Naive thymus-derived CD4-positive, alpha-beta T cell (primary cell): ENCODE measurements at regions of chr13 and their contacts with region 1.

Region 1: DNA sequence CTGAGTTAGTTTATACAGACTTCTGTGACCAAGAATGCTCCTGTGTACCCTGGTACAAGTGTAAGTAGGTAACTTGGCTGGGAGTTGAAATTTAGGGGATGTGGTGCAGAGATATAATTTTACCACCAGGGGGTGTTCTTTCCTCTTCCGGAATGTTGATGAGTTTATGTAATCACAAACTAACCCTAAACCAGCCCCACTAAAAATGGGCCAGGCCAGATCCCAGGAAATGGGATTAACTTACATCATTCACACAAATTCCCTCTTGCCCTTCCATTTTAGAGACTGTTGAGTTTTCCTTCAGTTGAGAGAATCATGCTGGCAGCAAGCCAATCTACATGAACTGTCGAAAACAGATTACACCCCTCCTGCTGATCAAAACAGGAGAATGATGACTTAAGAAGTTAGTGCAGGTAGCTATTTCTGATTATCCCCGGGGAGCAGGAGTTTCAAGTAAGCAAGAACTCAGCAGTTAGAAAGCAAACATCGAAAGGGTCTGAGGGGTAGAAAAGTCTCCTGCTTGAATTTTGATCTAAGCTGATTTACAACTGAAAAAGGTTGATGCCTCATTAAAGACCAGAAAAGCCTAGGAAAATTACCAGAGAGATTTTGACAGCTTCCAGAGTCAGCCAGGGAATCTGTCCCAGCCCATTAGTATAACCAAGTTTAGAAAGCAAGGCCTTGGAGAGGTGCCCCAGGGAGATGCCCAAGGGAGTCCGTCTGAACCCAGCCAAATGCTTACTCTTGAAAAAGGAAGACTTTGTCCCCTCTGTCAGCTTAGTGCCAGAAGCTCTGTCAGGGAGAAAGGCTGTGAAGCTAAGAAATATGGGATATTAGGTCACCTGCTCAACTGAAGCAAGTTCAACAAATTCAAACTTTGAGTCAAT is 32.3 kb upstream of the MED4 start:
- DNase-seq: peak in 8 of 9 donors; percentile 20 to 84 (median 80)
- ATAC-seq: peak; percentile 96
- H3K4me3 ChIP-seq: no peak overlapping the region
- H3K4me3 Mint-ChIP-seq: peak overlapping the region in 9 of 10 donors; percentile 25 to 69 (median 52)
- H3K27ac ChIP-seq: peak overlapping the region; percentile 54
- H3K27ac Mint-ChIP-seq: peak overlapping the region in 8 of 9 donors; percentile 83 to 95 (median 89)
- H3K4me1 ChIP-seq: peaks cover 5 to 15% of the 10 kb centered on the region in 2 donors
- H3K4me1 Mint-ChIP-seq: peaks cover 14 to 42% (median 35%) of the 10 kb centered on the region in 7 donors
- H3K27me3 ChIP-seq: no peaks in the 10 kb centered on the region
- H3K27me3 Mint-ChIP-seq: peaks cover 0 to 3% (median 0%) of the 10 kb centered on the region in 5 donors

Region 2: DNA sequence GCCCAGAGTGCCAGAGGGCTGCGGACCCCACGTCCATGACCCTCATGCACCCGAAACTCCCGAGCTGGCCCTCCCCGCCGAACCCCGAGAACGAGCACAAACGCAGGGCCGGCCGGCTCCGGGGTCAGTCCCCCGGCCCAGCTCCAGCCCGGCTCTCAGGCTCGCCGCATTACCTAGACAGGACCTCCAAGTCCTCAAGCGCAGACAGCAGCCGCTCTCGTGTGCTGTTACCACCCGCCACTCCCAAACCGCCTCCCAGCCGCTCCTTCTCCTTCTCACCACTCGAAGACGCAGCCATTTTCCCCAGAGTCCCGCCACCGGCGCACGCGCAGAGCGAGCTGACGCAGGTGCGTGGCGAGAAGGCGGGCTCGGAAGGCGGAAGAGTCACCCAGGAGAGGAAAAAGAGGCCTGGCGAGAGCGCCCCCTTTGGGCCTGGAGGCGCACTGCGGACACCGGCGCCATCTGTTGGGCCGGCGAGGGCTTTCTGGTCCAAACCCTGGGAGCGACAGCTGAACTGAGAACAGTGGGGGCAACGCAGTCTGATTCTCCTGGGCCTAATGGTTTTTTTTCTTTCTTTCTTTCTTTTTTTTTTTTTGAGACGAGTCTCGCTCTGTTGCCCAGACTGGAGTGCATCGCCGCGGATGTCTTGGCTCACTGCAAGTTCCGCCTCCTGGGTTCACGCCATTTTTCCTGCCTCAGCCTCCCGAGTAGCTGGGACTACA is 32.2 kb before region 1 on chr13 and contains the start of gene MED4:
- CTCF ChIA-PET with region 1: interaction called, 10 read pairs
- POLR2A ChIA-PET with region 1: no interaction called
- intact Hi-C with region 1: loop called in 1 of 2 experiments (anchors 2 kb)
- DNase-seq: peak; percentile 94 to 99 (median 98)
- ATAC-seq: peak; percentile 100
- H3K4me3 ChIP-seq: peak within 1 kb of the TSS; percentile 90
- H3K4me3 Mint-ChIP-seq: peak within 1 kb of the TSS; percentile 94 to 99 (median 96)
- H3K27ac ChIP-seq: peak within 1 kb of the TSS; percentile 99
- H3K27ac Mint-ChIP-seq: peak within 1 kb of the TSS; percentile 92 to 98 (median 96)
- H3K4me1 ChIP-seq: peaks cover 13 to 26% of the 10 kb centered on the region in 2 donors
- H3K4me1 Mint-ChIP-seq: peaks cover 26 to 56% (median 48%) of the 10 kb centered on the region in 7 donors
- H3K27me3 ChIP-seq: no peaks in the 10 kb centered on the region
- H3K27me3 Mint-ChIP-seq: peaks cover 0 to 9% (median 0%) of the 10 kb centered on the region in 5 donors
- total RNA-seq, gene MED4: 43.4 to 60.9 (median 50.0) TPM

Region 3: DNA sequence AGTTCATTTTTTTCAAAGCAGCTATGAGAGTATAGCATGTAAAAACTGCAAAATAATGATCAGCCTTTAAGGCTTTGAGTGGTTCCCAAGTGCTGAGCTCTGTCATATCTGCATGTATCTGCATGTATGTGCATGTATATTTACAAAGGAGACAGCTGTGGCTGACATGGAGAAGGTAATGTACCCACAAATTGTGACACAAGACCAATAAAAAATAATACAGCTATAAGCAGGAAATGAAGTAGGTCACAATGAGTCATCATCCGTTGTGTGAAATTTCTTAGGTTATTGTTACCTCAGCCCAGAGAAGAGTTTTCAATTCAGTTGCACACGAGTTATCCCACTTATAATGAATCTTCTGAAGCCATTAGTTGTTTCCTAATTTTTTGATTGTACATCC is 28.7 kb after region 1 on chr13:
- CTCF ChIA-PET with region 1: interaction called, 12 read pairs
- POLR2A ChIA-PET with region 1: interaction called, 23 read pairs
- intact Hi-C with region 1: loop called (anchors 1 kb)
- DNase-seq: peak in 7 of 9 donors; percentile 49 to 81 (median 74)
- ATAC-seq: peak; percentile 88
- H3K4me3 ChIP-seq: peak overlapping the region; percentile 34
- H3K4me3 Mint-ChIP-seq: peak overlapping the region; percentile 62 to 83 (median 74)
- H3K27ac ChIP-seq: peak overlapping the region; percentile 75
- H3K27ac Mint-ChIP-seq: peak overlapping the region; percentile 89 to 99 (median 92)
- H3K4me1 ChIP-seq: peaks cover 28 to 64% of the 10 kb centered on the region in 2 donors
- H3K4me1 Mint-ChIP-seq: peaks cover 47 to 89% (median 78%) of the 10 kb centered on the region in 7 donors
- H3K27me3 ChIP-seq: no peaks in the 10 kb centered on the region
- H3K27me3 Mint-ChIP-seq: no peaks in the 10 kb centered on the region

Region 4: DNA sequence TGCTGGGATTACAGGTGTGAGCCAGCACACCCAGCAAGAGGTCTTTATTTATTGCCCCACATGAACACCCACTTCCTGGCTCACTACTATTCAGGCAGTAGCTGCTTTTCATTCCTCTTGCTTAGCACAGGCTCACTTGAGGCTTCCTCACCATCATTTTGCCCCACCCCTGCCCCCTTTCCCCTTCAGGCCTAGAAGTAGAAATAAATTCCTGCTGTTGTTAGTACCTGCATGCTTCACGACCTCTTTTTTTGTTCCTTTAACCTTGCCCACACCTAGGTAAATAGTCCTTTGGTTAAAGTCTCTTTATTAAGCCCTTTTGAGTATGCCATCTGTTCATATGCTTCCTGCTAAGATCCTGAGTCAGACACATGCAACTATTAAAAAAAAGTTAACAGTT is 72.3 kb after region 1 on chr13:
- CTCF ChIA-PET with region 1: interaction called, 5 read pairs
- POLR2A ChIA-PET with region 1: no interaction called
- intact Hi-C with region 1: loop called in 1 of 2 experiments (anchors 1 kb)
- DNase-seq: no peak
- ATAC-seq: no peak
- H3K4me3 ChIP-seq: no peak overlapping the region
- H3K4me3 Mint-ChIP-seq: peak overlapping the region in 6 of 10 donors; percentile 1 to 44 (median 10)
- H3K27ac ChIP-seq: no peak overlapping the region
- H3K27ac Mint-ChIP-seq: peak overlapping the region in 8 of 9 donors; percentile 46 to 82 (median 69)
- H3K4me1 ChIP-seq: peaks cover under 1 to 10% of the 10 kb centered on the region in 2 donors
- H3K4me1 Mint-ChIP-seq: peaks cover 5 to 36% (median 28%) of the 10 kb centered on the region in 7 donors
- H3K27me3 ChIP-seq: no peaks in the 10 kb centered on the region
- H3K27me3 Mint-ChIP-seq: peaks cover 0 to 35% (median 0%) of the 10 kb centered on the region in 5 donors

Region 5: GRCh38 chr13:48244159-48244558 is 117.0 kb after region 1 on chr13:
- CTCF ChIA-PET with region 1: interaction called, 8 read pairs
- POLR2A ChIA-PET with region 1: interaction called, 14 read pairs
- intact Hi-C with region 1: no loop called
- DNase-seq: no peak
- ATAC-seq: no peak
- H3K4me3 ChIP-seq: no peak overlapping the region
- H3K4me3 Mint-ChIP-seq: peak overlapping the region in 6 of 10 donors; percentile 7 to 46 (median 26)
- H3K27ac ChIP-seq: peak overlapping the region; percentile 5
- H3K27ac Mint-ChIP-seq: peak overlapping the region in 5 of 9 donors; percentile 9 to 72 (median 60)
- H3K4me1 ChIP-seq: peaks cover 30 to 31% of the 10 kb centered on the region in 2 donors
- H3K4me1 Mint-ChIP-seq: peaks cover 16 to 87% (median 65%) of the 10 kb centered on the region in 7 donors
- H3K27me3 ChIP-seq: no peaks in the 10 kb centered on the region
- H3K27me3 Mint-ChIP-seq: no peaks in the 10 kb centered on the region

Region 6: DNA sequence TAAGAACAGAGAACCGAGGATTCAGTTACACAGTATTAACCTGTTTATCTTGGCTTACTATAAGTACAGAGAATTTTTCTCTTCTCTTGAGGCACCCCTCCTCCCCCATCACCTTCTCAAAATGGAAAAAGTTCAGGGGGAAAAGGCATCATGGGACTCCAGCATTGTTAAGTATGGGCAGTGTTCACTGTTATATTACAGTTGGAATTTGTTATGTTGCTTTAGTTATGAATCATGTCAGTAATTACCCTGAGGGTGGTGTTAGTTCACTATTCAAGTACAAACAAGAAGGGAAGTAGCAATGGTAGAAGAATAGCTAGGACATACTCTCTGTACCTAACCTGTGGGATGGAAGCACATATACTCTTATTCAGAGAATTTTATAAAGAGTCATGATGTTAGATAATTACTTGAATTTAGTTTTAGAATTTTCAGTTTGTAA is 273.7 kb after region 1 on chr13:
- CTCF ChIA-PET with region 1: no interaction called
- POLR2A ChIA-PET with region 1: no interaction called
- intact Hi-C with region 1: loop called in 1 of 2 experiments (anchors 2 kb)
- DNase-seq: peak in 2 of 9 donors; percentile 36 to 42
- ATAC-seq: peak; percentile 74
- H3K4me3 ChIP-seq: no peak overlapping the region
- H3K4me3 Mint-ChIP-seq: peak overlapping the region; percentile 1 to 83 (median 54)
- H3K27ac ChIP-seq: peak overlapping the region; percentile 49
- H3K27ac Mint-ChIP-seq: peak overlapping the region; percentile 1 to 90 (median 50)
- H3K4me1 ChIP-seq: peaks cover 33 to 40% of the 10 kb centered on the region in 2 donors
- H3K4me1 Mint-ChIP-seq: peaks cover 23 to 78% (median 63%) of the 10 kb centered on the region in 7 donors
- H3K27me3 ChIP-seq: no peaks in the 10 kb centered on the region
- H3K27me3 Mint-ChIP-seq: no peaks in the 10 kb centered on the region